ENCODE measurements at regions of chr11 and their contacts with region 1.

Region 1: GRCh38 chr11:117985953-117986887 is at the start of gene IL10RA:
- DNase-seq: peak; percentile 92
- ATAC-seq: peak; percentile 92
- H3K4me3 ChIP-seq: peak within 1 kb of the TSS; percentile 82 to 99 (median 98)
- H3K4me3 Mint-ChIP-seq: peak within 1 kb of the TSS; percentile 92
- H3K27ac ChIP-seq: peak within 1 kb of the TSS; percentile 93 to 94
- H3K27ac Mint-ChIP-seq: peak within 1 kb of the TSS; percentile 94
- H3K4me1 ChIP-seq: peaks cover 54 to 75% of the 10 kb centered on the region in 2 donors
- H3K4me1 Mint-ChIP-seq: peaks cover 76% of the 10 kb centered on the region
- H3K27me3 ChIP-seq: no peaks in the 10 kb centered on the region
- H3K27me3 Mint-ChIP-seq: no peaks in the 10 kb centered on the region
- CTCF ChIP-seq: no peak
- total RNA-seq, gene IL10RA: 417 and 434 TPM in 2 replicates

Region 2: DNA sequence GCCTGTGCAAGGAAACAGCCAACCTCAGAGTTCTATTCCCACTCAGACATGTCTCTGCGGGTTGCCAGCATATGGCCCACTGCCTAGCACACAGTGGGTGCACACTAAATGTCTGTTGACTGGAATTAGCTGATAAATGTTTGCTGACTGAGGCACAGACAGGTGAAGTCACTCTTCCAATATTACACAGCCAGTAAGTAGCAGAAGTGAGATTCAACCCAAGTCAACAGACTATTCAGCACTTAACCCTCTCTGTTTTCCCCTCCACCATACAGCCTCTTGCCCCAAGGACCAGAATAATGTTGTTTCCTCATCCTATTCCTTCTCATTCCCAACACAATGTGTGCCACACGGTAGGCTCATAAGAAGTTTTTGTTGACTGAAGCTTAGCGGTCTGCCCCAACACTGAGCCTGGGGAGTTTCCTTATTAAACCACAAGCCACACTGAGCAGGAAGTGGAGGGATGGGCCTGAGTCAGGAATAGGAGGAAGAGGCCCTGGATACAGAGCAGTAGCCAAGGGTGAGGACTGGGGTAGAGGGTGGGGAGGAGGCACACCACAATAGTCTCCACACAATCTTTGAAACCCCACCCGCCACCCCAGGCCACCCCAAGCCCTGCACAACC is 15.7 kb before region 1 on chr11:
- CTCF ChIA-PET with region 1: interaction called, 3 read pairs
- POLR2A ChIA-PET with region 1: interaction called, 4 read pairs
- intact Hi-C with region 1: loop called (anchors 2 kb)
- DNase-seq: no peak
- ATAC-seq: peak; percentile 36
- H3K4me3 ChIP-seq: no peak overlapping the region
- H3K4me3 Mint-ChIP-seq: peak overlapping the region; percentile 36
- H3K27ac ChIP-seq: no peak overlapping the region
- H3K27ac Mint-ChIP-seq: no peak overlapping the region
- H3K4me1 ChIP-seq: peaks cover 14 to 25% of the 10 kb centered on the region in 2 donors
- H3K4me1 Mint-ChIP-seq: peaks cover 36% of the 10 kb centered on the region
- H3K27me3 ChIP-seq: no peaks in the 10 kb centered on the region
- H3K27me3 Mint-ChIP-seq: no peaks in the 10 kb centered on the region
- CTCF ChIP-seq: no peak

Region 3: DNA sequence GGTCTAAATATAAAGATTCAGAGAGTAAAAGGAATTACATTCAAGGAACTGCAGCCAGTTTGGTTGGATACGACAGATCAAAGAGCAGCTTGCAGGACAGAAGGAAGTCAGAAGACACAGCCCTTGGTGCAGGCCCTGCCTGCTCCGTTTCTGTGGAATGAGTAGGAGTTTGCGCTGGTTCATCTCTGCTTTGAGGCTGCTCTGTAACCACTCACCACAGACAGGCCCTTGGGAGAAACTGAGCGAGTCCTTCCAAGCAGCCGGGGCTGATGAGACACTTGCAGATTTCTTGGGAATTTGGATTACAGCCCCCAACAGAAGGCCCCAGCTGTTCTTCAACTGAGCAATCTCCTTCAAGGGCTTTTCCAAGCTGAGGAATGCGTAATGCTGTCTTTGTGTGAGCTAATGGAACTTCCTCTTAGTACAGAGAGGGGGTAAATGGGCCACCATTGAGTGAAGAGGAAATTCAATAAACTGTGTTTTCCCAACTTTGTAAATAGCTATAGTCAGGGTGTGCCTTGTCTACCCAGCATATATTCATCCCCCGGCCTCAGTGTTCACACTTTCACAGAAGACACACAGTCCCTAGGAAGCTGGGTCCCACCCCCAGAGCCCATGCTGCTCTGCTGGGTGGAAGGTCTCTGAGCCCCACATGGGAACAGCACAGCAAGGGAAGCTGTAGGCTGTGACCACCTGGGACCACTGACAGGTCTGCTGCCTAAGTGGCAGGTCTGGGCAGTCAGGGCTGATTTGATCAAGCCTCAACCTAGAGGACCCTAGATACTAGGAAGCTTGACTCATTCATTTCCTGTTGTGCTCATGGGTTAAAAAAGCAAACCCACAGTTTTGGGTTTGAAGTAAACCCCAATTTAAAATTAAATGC is 16.6 kb after region 1 on chr11:
- CTCF ChIA-PET with region 1: interaction called, 34 read pairs
- POLR2A ChIA-PET with region 1: interaction called, 346 read pairs
- intact Hi-C with region 1: loop called (anchors 1 kb)
- DNase-seq: peak; percentile 52
- ATAC-seq: peak; percentile 14
- H3K4me3 ChIP-seq: no peak overlapping the region
- H3K4me3 Mint-ChIP-seq: peak overlapping the region; percentile 56
- H3K27ac ChIP-seq: peak overlapping the region; percentile 64 to 99
- H3K27ac Mint-ChIP-seq: peak overlapping the region; percentile 99
- H3K4me1 ChIP-seq: peaks cover 67 to 76% of the 10 kb centered on the region in 2 donors
- H3K4me1 Mint-ChIP-seq: peaks cover 84% of the 10 kb centered on the region
- H3K27me3 ChIP-seq: no peaks in the 10 kb centered on the region
- H3K27me3 Mint-ChIP-seq: no peaks in the 10 kb centered on the region
- CTCF ChIP-seq: no peak

Region 4: GRCh38 chr11:118010738-118011461 is 24.7 kb after region 1 on chr11:
- CTCF ChIA-PET with region 1: interaction called, 34 read pairs
- POLR2A ChIA-PET with region 1: interaction called, 346 read pairs
- intact Hi-C with region 1: loop called (anchors 1 kb)
- DNase-seq: peak; percentile 96
- ATAC-seq: peak; percentile 73
- H3K4me3 ChIP-seq: peak overlapping the region in 2 of 5 experiments; percentile 2 to 38
- H3K4me3 Mint-ChIP-seq: peak overlapping the region; percentile 75
- H3K27ac ChIP-seq: peak overlapping the region; percentile 95 to 99
- H3K27ac Mint-ChIP-seq: peak overlapping the region; percentile 99
- H3K4me1 ChIP-seq: peaks cover 99 to 100% of the 10 kb centered on the region in 2 donors
- H3K4me1 Mint-ChIP-seq: peaks cover 100% of the 10 kb centered on the region
- H3K27me3 ChIP-seq: no peaks in the 10 kb centered on the region
- H3K27me3 Mint-ChIP-seq: no peaks in the 10 kb centered on the region
- CTCF ChIP-seq: no peak

Region 5: GRCh38 chr11:118046051-118046963 is 60.1 kb after region 1 on chr11:
- CTCF ChIA-PET with region 1: interaction called, 72 read pairs
- POLR2A ChIA-PET with region 1: interaction called, 23 read pairs
- intact Hi-C with region 1: no loop called
- DNase-seq: no peak
- ATAC-seq: no peak
- H3K4me3 ChIP-seq: no peak overlapping the region
- H3K4me3 Mint-ChIP-seq: no peak overlapping the region
- H3K27ac ChIP-seq: no peak overlapping the region
- H3K27ac Mint-ChIP-seq: no peak overlapping the region
- H3K4me1 ChIP-seq: peaks cover 11 to 15% of the 10 kb centered on the region in 2 donors
- H3K4me1 Mint-ChIP-seq: peaks cover 40% of the 10 kb centered on the region
- H3K27me3 ChIP-seq: no peaks in the 10 kb centered on the region
- H3K27me3 Mint-ChIP-seq: no peaks in the 10 kb centered on the region
- CTCF ChIP-seq: no peak